Right ventricle myocardium inferior (tissue), 1 donor: ENCODE measurements at regions of chr2 and their contacts with region 1.

Region 1: DNA sequence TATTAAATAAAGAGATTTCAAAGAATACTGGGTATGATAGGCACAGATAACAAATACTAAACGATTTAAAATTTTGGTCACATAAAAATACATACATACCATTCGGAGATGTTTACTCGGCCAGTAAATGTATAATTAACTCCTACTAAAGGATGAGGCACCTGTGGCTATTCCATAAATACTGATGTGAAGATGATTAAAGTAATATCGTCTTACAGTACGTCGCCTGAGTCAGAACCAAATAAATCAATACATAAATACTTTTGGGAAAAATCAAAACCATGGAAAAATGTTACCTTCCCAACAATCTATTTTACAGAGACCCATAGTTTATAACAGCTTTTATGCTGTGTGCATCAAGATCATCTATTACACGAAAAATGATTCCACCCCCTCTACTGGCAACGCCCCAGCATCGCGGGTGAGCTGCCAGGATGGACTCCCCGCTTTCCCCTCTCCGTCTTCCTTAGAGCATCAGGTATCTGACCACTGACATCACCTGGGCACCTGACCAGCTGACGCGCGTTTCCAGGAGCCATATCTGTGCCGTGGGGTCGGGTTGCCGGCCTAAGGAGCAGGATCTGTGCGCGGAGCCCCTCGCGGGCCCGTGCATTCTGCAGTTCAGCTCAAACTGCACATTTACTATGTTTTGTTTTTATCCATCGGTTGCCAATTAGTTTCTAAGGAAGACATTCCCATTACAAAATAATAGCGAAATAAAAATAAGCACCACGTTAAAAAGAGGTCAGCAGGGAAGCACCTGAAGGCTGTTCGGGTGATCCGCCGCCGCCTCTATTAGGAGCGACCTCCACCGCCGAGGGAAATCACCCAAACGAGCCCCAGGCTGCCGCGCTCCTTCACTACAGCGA is 901 bp downstream of the ICA1L start:
- DNase-seq: peak; percentile 66
- ATAC-seq: peak; percentile 87

Region 2: GRCh38 chr2:202588647-202589581 is 281.8 kb before region 1 on chr2:
- intact Hi-C with region 1: loop called (anchors 5 kb)
- DNase-seq: peak; percentile 73
- ATAC-seq: peak; percentile 83

Region 3: DNA sequence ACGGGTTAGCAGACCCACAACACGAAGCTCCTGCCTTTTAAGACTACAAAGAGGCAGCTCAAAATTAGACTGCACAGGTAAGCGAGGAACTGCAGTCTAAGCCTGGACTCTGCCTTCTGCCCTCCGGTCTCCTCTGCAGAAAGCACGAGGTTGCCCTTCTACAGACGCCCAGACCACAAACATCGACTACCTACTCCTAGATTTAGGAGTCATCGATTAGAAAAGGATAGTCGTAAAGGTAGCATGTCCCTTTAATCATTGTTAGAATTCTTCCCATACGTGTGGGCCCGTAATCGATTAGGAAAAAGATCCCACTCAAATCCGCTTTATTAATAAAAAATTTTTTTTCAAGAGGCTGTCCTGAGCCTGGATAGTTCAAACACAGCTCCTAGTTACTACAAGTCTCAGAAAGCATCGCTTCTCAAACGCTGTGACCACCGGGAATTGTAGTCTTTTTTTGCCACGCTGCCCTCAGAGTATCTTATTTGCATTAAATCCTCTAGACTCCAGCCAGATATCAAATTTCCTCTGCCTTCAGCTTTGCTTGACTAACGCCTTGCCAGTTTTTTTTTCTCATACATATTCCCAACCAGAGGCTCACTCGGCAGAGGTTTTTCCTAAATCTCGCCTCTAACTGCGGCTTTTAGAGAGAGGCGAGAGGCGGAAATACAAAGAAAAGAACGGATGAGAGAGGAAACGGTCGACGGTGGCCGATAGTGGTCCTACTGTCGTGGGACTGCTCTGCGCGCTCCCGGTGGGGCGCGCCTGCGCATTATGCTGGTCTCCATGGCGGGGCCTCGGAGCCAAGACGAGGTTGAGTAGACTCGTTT is 41.1 kb after region 1 on chr2 and contains the starts of genes CARF and WDR12:
- intact Hi-C with region 1: loop called (anchors 2 kb)
- DNase-seq: peak; percentile 97
- ATAC-seq: peak; percentile 99
- total RNA-seq, gene CARF: 5.2 TPM
- total RNA-seq, gene WDR12: 54.1 TPM